PC-9 (cell line): ENCODE measurements at regions of chr12 and their contacts with region 1.

Region 1: GRCh38 chr12:67482751-67483671 is 165.5 kb upstream of the DYRK2 start:
- DNase-seq: peak; percentile 55 to 78
- H3K4me3 ChIP-seq: peak overlapping the region; percentile 19; the same call in 1 of the 2 replicates
- H3K27ac ChIP-seq: peak overlapping the region; percentile 92
- H3K4me1 ChIP-seq: peaks cover 64% of the 10 kb centered on the region
- H3K27me3 ChIP-seq: no peaks in the 10 kb centered on the region
- CTCF ChIP-seq: no peak

Region 2: GRCh38 chr12:67222302-67222701 is 260.7 kb before region 1 on chr12:
- CTCF ChIA-PET with region 1: no interaction called
- POLR2A ChIA-PET with region 1: no interaction called
- intact Hi-C with region 1: no loop called
- DNase-seq: peak in 1 of 2 experiments; percentile 4
- H3K4me3 ChIP-seq: no peak overlapping the region
- H3K27ac ChIP-seq: no peak overlapping the region
- H3K4me1 ChIP-seq: no peaks in the 10 kb centered on the region
- H3K27me3 ChIP-seq: no peaks in the 10 kb centered on the region
- CTCF ChIP-seq: peak; percentile 60; the same call in 1 of the 2 replicates

Region 3: GRCh38 chr12:67441736-67442346 is 41.2 kb before region 1 on chr12:
- CTCF ChIA-PET with region 1: no interaction called
- POLR2A ChIA-PET with region 1: no interaction called
- intact Hi-C with region 1: loop called (anchors 5 kb)
- DNase-seq: peak in 1 of 2 experiments; percentile 77
- H3K4me3 ChIP-seq: no peak overlapping the region
- H3K27ac ChIP-seq: no peak overlapping the region
- H3K4me1 ChIP-seq: no peaks in the 10 kb centered on the region
- H3K27me3 ChIP-seq: no peaks in the 10 kb centered on the region
- CTCF ChIP-seq: peak; percentile 57

Region 4: DNA sequence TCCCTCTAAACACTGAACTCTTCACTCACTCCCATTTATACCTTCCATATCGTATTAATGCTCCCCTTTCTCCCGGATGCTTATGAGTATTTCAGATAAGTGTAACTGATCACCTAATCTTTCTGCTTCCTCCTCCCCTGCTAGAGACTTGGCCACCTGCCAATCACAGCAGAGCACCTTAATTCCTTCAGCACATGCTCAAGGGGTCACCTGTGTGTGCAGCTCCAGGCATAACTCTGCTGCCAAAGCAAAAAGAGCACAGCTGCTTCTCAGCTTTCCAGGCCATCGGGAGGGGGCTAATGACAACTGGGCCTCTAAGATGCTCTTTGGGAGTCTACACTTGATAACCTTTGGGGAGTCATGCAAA is 58.6 kb after region 1 on chr12:
- CTCF ChIA-PET with region 1: no interaction called
- POLR2A ChIA-PET with region 1: no interaction called
- intact Hi-C with region 1: no loop called
- DNase-seq: peak in 1 of 2 experiments; percentile 37
- H3K4me3 ChIP-seq: no peak overlapping the region
- H3K27ac ChIP-seq: no peak overlapping the region
- H3K4me1 ChIP-seq: no peaks in the 10 kb centered on the region
- H3K27me3 ChIP-seq: no peaks in the 10 kb centered on the region
- CTCF ChIP-seq: no peak

Region 5: DNA sequence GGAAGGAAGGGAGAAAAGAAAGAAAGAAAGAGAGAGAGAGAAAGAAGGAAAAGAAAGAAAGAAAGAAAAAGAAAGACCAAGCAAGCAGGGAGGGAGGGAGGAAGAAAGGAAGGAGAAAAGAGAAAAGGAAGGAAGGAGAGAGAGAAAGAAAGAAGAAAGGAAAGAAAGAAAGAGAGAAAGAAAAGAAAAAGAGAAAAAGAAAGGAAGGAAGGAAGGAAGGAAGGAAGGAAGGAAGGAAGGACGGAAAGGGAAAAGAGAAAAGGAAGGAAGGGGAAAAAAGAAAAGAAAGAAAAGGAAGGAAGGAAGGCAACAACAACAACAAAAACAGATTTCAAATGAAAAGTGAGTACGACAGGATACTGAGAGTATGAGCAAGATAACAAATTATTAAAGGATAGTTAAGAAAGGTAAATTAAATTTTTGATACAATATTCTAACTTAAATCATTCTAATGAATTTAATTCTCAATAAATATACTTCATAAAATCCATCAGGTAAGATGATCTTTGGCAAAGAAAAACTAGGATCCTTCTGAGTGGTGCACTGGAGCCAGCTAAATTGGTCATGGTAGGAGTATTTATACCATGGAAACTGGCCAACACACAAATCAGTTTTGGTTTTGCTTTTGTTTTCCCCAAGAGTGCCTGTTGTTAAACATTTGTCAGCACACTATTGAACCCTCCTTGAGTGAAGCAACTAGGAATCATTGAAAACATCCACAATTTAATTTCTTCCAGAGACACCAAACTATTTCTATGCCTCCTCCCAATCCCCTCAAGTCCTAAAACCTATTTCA is 109.4 kb after region 1 on chr12:
- CTCF ChIA-PET with region 1: no interaction called
- POLR2A ChIA-PET with region 1: interaction called, 9 read pairs
- intact Hi-C with region 1: loop called (anchors 1 kb)
- DNase-seq: peak; percentile 29 to 61
- H3K4me3 ChIP-seq: peak overlapping the region; percentile 28; the same call in 1 of the 2 replicates
- H3K27ac ChIP-seq: peak overlapping the region; percentile 98
- H3K4me1 ChIP-seq: peaks cover 47% of the 10 kb centered on the region
- H3K27me3 ChIP-seq: no peaks in the 10 kb centered on the region
- CTCF ChIP-seq: no peak

Region 6: DNA sequence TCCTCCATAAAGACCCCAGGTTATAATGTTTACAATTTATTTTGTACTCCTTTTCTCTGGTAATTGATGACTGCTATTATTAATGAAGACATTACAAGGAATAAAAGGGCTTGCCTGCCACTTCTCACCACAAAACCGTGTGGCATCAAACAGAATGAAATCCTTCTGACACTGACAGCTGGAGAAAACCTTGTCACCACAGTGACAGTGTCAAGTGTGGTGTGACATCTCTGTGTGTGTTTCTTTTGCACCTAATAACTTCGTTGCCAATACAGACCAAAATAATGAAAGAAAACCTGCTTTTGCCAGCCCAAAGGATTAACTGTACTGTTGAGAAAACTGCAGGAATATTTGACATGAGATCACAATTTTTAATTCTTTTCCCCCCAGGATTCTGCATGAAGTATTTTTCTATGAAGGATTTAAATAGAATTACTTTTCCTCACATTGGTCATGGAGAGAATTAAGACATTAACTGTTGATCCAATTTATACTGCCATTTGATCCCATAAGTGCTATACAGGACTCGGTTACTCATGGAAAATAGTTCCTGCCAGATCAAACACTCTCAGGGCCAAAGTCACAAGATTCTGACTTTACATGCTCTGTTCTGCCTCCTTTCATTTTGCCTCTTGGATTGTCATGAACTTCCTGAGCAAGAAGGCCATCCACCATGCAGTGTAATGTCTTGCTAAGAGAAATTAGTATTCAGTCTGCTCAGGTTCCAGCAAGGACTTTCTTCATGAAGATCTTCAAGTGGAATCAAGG is 445.8 kb after region 1 on chr12:
- CTCF ChIA-PET with region 1: no interaction called
- POLR2A ChIA-PET with region 1: no interaction called
- intact Hi-C with region 1: loop called (anchors 1 kb)
- DNase-seq: no peak
- H3K4me3 ChIP-seq: no peak overlapping the region
- H3K27ac ChIP-seq: no peak overlapping the region
- H3K4me1 ChIP-seq: peaks cover 22% of the 10 kb centered on the region
- H3K27me3 ChIP-seq: no peaks in the 10 kb centered on the region
- CTCF ChIP-seq: no peak

Region 7: DNA sequence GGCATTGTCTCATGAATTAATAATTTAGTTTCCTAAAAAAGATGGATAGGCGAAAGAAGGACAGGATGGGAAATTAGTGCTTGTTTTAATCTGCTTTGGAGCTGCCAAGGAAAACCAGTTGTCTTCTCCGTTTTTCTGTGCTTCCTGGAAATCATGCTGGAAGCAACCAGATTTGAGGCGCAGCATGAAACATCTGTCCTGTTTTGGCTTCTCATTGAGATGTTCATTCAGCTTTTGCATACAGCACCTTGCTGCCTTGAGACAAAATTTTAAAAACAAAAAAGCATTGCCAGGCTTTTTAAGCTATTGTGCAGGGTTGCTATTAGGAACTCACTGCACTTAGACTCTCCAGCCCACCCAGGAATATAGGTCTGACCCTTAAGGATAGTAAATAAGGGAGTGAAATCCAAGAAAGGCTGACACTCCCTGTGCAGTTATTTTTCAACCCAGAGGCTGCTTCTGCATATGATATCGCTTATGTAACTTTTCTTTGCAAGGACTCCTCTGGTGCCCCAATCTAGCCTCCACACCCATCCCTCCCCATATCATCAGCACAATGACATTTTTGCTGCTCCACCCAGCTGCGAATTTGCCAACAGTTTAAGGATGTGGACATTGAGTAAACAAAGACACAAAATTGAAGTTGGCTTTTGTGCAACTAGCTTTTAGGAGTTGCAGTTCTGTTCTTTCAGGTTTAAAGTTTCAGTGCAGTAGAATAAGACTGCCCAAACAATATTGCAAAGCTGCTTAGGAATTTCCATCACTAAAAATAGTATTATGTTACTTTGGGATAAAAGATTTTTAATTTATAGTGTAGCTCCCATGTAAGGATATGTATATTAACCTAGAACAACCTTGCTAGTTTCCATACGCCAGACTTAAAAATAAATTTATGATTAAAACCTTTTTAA is 896.1 kb after region 1 on chr12:
- CTCF ChIA-PET with region 1: no interaction called
- POLR2A ChIA-PET with region 1: interaction called, 24 read pairs
- intact Hi-C with region 1: no loop called
- DNase-seq: peak; percentile 59 to 78
- H3K4me3 ChIP-seq: no peak overlapping the region
- H3K27ac ChIP-seq: no peak overlapping the region
- H3K4me1 ChIP-seq: peaks cover 32% of the 10 kb centered on the region
- H3K27me3 ChIP-seq: no peaks in the 10 kb centered on the region
- CTCF ChIP-seq: no peak